RWPE1 (cell line): ENCODE measurements at regions of chr1 and their contacts with region 1.

Region 1: GRCh38 chr1:193121616-193122593 is at the start of gene CDC73:
- DNase-seq: peak; percentile 95
- H3K27ac ChIP-seq: peak within 1 kb of the TSS; percentile 99
- CTCF ChIP-seq: peak; percentile 91

Region 2: DNA sequence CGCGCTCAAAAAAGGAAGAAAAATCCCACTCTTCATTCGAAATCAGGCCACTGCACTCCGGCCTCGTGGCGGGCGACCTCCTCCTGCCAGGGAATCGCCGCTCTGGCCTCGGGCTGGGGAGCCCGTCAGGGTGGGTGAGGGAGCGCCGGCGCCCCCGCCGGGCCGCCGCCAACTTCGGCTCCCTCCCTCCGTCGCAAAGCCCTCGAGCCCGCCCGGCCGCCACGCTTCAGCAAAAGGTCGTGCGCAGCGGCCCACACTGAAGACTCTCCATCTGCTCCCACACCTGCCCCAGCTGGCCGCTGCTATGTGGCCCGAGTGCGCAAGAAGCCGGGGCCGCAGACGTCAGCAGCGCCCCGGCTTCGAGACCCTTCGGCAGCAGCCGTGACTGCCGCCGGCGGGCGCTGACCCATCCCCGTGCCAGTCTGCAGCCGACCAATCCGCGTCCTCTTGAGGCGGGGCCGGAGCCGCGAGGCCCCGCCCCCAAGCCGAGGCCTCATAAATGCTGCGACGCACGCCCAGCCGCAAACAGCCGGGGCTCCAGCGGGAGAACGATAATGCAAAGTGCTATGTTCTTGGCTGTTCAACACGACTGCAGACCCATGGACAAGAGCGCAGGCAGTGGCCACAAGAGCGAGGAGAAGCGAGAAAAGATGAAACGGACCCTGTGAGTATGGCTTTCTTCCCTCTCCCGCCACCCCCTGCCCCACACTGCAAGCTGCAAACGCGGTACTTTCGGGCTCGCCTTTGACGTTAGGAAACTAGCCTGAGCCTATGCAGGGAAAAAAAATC is 313.2 kb before region 1 on chr1 and contains the start of gene RGS2:
- CTCF ChIA-PET with region 1: interaction called, 15 read pairs
- POLR2A ChIA-PET with region 1: no interaction called
- DNase-seq: peak; percentile 96
- H3K27ac ChIP-seq: peak within 1 kb of the TSS; percentile 64
- CTCF ChIP-seq: no peak

Region 3: GRCh38 chr1:193104906-193105820 is 16.7 kb before region 1 on chr1 and contains the start of gene GLRX2:
- CTCF ChIA-PET with region 1: interaction called, 18 read pairs
- POLR2A ChIA-PET with region 1: interaction called, 5 read pairs
- DNase-seq: peak; percentile 93
- H3K27ac ChIP-seq: peak within 1 kb of the TSS; percentile 97
- CTCF ChIP-seq: no peak

Region 4: DNA sequence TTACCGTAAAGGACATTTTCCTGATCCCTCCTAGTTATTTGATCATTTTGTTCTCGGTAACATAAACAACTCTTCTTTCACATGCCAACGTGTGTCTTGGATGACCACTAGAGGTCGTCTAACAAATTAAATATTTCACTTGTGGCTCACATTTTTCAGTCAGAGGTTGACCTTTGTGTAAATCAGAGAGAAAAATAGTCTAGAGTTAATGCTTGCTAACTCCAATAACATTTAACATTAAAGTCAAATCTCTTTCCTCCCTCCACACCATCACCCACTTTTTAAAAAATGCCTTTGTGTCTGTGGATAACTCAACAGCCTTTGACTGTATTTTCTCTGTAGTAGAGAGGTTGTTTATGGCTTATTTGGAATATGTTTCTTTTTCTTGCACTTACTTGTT is 285.0 kb after region 1 on chr1:
- CTCF ChIA-PET with region 1: no interaction called
- POLR2A ChIA-PET with region 1: no interaction called
- DNase-seq: peak; percentile 51
- H3K27ac ChIP-seq: no peak overlapping the region
- CTCF ChIP-seq: peak; percentile 76